Natural killer cell (primary cell): ENCODE measurements at regions of chr10 and their contacts with region 1.

Region 1: GRCh38 chr10:29658984-29659965 is 24.5 kb upstream of the SVIL start:
- DNase-seq: peak; percentile 65 to 91
- ATAC-seq: peak; percentile 85 to 97 (median 93)
- H3K4me3 ChIP-seq: no peak overlapping the region
- H3K4me3 Mint-ChIP-seq: peak overlapping the region; percentile 82
- H3K27ac ChIP-seq: peak overlapping the region; percentile 81
- H3K27ac Mint-ChIP-seq: peak overlapping the region; percentile 86 to 92
- H3K4me1 ChIP-seq: peaks cover 38% of the 10 kb centered on the region
- H3K4me1 Mint-ChIP-seq: peaks cover 55 to 67% of the 10 kb centered on the region in 2 donors
- H3K27me3 ChIP-seq: no peaks in the 10 kb centered on the region
- H3K27me3 Mint-ChIP-seq: no peaks in the 10 kb centered on the region
- CTCF ChIP-seq: no peak

Region 2: DNA sequence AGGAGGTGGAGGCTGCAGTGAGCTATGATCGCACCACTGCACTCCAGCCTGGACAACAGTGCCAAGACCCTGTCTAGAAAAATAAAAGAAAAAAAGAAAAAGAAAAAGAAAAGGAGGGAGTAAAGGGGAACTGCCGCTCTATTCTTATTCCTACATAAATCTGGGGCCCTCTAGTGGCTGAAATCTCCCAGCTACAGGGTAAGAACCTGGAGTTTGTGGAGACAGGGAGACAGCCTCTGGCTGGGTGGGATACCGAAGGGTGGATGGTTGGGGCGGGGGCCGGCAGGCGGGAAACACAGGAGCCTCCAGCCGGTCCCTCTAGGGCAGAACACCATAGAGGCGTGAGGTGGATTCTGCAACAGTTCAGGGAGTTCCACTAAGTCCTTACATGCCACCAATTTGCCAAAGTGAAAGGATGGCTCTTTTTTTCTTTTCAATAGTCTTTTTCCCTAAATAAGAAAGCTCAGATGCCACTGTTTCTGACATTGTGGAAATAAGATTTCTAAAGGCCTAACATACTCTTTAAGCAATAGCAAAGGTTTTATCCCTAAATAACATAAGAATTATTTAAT is 141.8 kb before region 1 on chr10:
- intact Hi-C with region 1: no loop called
- DNase-seq: no peak
- ATAC-seq: no peak
- H3K4me3 ChIP-seq: no peak overlapping the region
- H3K4me3 Mint-ChIP-seq: no peak overlapping the region
- H3K27ac ChIP-seq: no peak overlapping the region
- H3K27ac Mint-ChIP-seq: no peak overlapping the region
- H3K4me1 ChIP-seq: peaks cover 2% of the 10 kb centered on the region
- H3K4me1 Mint-ChIP-seq: peaks cover 1 to 2% of the 10 kb centered on the region in 2 donors
- H3K27me3 ChIP-seq: no peaks in the 10 kb centered on the region
- H3K27me3 Mint-ChIP-seq: no peaks in the 10 kb centered on the region
- CTCF ChIP-seq: no peak

Region 3: GRCh38 chr10:29635711-29636144 is 23.5 kb before region 1 on chr10:
- intact Hi-C with region 1: loop called (anchors 1 kb)
- DNase-seq: peak; percentile 40 to 54
- ATAC-seq: peak; percentile 36 to 54 (median 36)
- H3K4me3 ChIP-seq: no peak overlapping the region
- H3K4me3 Mint-ChIP-seq: peak overlapping the region; percentile 78
- H3K27ac ChIP-seq: peak overlapping the region; percentile 83
- H3K27ac Mint-ChIP-seq: peak overlapping the region; percentile 76 to 87
- H3K4me1 ChIP-seq: peaks cover 28% of the 10 kb centered on the region
- H3K4me1 Mint-ChIP-seq: peaks cover 46 to 54% of the 10 kb centered on the region in 2 donors
- H3K27me3 ChIP-seq: no peaks in the 10 kb centered on the region
- H3K27me3 Mint-ChIP-seq: peaks cover 0 to 3% of the 10 kb centered on the region in 2 donors
- CTCF ChIP-seq: no peak

Region 4: DNA sequence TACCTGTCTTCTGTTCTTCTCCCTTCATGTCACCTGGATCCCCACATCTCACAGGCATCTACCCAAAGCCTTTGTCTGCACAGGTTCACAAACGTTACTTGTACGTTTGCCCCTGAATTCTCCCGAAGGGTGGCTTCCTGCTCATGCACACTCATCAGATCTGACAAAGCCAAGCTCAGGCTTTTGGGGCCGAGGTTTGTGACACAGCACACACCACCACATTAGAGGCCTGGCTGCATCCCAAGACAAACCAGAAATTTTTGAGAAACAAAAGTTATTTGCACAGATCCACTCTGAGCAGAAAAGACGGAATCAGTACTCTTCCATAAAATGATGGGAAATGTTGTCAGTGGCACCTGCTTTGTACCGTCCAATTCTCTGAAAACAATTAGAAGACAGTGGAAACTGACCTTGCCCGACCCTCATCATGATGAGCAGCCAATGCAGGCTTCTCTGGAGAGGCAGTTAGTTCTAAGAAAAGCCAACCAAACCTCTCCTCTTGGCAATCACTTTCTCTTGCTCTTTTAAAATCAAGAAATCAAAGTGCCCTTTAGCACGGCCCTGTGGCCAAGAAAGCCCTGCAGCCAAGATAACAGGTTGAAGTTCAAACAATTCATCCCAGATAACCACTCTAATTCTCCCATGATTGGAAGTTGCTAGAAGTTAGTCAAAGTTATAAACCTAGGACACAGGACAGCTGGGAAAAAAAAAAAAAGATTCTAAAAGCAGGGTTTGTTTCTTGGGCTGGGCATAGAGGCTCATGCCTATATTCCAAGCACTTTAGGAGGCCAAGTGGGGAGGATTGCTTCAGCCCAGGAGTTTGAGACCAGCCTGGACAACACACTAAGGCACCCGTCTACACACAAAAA is 10.9 kb before region 1 on chr10:
- intact Hi-C with region 1: loop called (anchors 1 kb)
- DNase-seq: peak in 1 of 2 donors; percentile 45
- ATAC-seq: peak in 2 of 3 donors; percentile 41 to 60
- H3K4me3 ChIP-seq: no peak overlapping the region
- H3K4me3 Mint-ChIP-seq: peak overlapping the region; percentile 29
- H3K27ac ChIP-seq: no peak overlapping the region
- H3K27ac Mint-ChIP-seq: peak overlapping the region in 1 of 2 donors; percentile 78
- H3K4me1 ChIP-seq: peaks cover 20% of the 10 kb centered on the region
- H3K4me1 Mint-ChIP-seq: peaks cover 36 to 48% of the 10 kb centered on the region in 2 donors
- H3K27me3 ChIP-seq: no peaks in the 10 kb centered on the region
- H3K27me3 Mint-ChIP-seq: no peaks in the 10 kb centered on the region
- CTCF ChIP-seq: no peak

Region 5: DNA sequence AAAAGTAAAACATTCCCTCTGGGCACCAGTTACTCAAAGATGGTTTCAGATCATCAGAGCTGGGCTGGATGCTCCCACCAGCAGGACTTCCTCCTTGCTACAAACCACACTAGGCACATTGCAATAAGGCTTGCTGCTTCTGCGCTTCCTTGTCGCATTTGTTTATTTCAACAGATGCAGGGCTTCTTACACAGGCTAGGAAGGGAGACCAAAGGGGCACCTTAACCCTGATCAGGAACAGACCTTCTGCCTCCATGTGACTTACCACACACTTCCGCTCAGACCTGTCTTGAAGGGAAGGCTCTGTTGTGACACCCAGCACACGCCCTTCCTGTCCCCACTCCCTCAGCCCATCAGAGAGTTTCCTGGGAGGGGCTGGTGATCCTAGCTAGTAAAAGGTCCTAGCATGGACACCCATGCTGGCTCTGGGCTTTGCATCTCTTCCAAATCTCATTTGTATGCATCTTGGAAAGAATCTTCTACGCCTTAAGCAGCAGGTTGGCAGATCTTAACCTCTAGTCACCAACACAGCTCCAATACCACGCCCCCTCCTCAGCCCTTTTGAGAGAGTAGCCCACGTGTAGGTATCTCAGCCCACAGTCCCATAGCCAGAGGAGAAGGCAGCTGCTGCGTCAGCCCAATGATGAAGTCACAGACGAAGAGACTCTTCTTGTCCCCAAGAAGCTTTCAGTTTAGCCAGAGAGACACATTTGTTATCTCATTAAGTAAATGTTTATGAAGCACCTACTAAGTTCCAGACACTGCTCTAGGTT is 22.6 kb after region 1 on chr10:
- intact Hi-C with region 1: loop called (anchors 1 kb)
- DNase-seq: peak; percentile 44 to 87
- ATAC-seq: peak; percentile 88 to 96 (median 92)
- H3K4me3 ChIP-seq: peak overlapping the region; percentile 2
- H3K4me3 Mint-ChIP-seq: peak overlapping the region; percentile 78
- H3K27ac ChIP-seq: peak overlapping the region; percentile 78
- H3K27ac Mint-ChIP-seq: peak overlapping the region; percentile 90 to 95
- H3K4me1 ChIP-seq: peaks cover 56% of the 10 kb centered on the region
- H3K4me1 Mint-ChIP-seq: peaks cover 82 to 87% of the 10 kb centered on the region in 2 donors
- H3K27me3 ChIP-seq: no peaks in the 10 kb centered on the region
- H3K27me3 Mint-ChIP-seq: no peaks in the 10 kb centered on the region
- CTCF ChIP-seq: no peak

Region 6: DNA sequence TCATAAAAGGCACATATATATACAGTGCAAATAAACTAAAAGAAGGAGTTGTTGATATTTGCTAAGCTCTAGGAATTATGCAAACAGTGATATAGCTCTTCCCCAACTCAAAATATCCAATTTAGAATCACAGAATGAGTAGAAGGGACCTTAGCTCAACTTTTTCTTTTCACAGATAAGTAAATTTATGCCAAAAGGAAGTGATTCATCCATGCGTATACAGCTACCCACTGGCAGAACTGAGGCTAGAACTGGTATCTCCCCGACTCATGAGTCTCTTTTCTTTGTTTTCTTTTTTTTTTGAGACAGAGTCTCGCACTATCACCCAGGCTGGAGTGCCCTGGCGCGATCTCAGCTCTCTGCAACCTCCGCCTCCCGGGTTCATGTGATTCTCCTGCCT is 29.7 kb after region 1 on chr10:
- intact Hi-C with region 1: loop called (anchors 2 kb)
- DNase-seq: peak in 1 of 2 donors; percentile 34
- ATAC-seq: peak; percentile 78 to 80 (median 80)
- H3K4me3 ChIP-seq: no peak overlapping the region
- H3K4me3 Mint-ChIP-seq: peak overlapping the region; percentile 49
- H3K27ac ChIP-seq: peak overlapping the region; percentile 2
- H3K27ac Mint-ChIP-seq: peak overlapping the region; percentile 56 to 85
- H3K4me1 ChIP-seq: peaks cover 19% of the 10 kb centered on the region
- H3K4me1 Mint-ChIP-seq: peaks cover 54 to 57% of the 10 kb centered on the region in 2 donors
- H3K27me3 ChIP-seq: no peaks in the 10 kb centered on the region
- H3K27me3 Mint-ChIP-seq: no peaks in the 10 kb centered on the region
- CTCF ChIP-seq: no peak

Region 7: GRCh38 chr10:29735596-29736318 is 76.5 kb after region 1 on chr10:
- intact Hi-C with region 1: loop called (anchors 1 kb)
- DNase-seq: peak; percentile 84 to 86
- ATAC-seq: peak; percentile 85 to 91 (median 86)
- H3K4me3 ChIP-seq: peak overlapping the region; percentile 58
- H3K4me3 Mint-ChIP-seq: peak overlapping the region; percentile 86
- H3K27ac ChIP-seq: no peak overlapping the region
- H3K27ac Mint-ChIP-seq: peak overlapping the region in 1 of 2 donors; percentile 80
- H3K4me1 ChIP-seq: peaks cover 23% of the 10 kb centered on the region
- H3K4me1 Mint-ChIP-seq: peaks cover 11 to 36% of the 10 kb centered on the region in 2 donors
- H3K27me3 ChIP-seq: peaks cover 2% of the 10 kb centered on the region
- H3K27me3 Mint-ChIP-seq: peaks cover 14 to 16% of the 10 kb centered on the region in 2 donors
- CTCF ChIP-seq: peak; percentile 95